Left cardiac atrium (tissue), 4 donors: ENCODE measurements at regions of chr10 and their contacts with region 1.

Region 1: GRCh38 chr10:12919574-12919973 is 81.9 kb downstream of the CCDC3 start:
- DNase-seq: no peak
- ATAC-seq: peak in 1 of 2 donors; percentile 27

Region 2: GRCh38 chr10:13056456-13057077 is 137.0 kb after region 1 on chr10:
- intact Hi-C with region 1: loop called in 1 of 2 experiments (anchors 5 kb)
- DNase-seq: no peak
- ATAC-seq: no peak